Caco-2 (cell line): ENCODE measurements at regions of chr12 and their contacts with region 1.

Region 1: DNA sequence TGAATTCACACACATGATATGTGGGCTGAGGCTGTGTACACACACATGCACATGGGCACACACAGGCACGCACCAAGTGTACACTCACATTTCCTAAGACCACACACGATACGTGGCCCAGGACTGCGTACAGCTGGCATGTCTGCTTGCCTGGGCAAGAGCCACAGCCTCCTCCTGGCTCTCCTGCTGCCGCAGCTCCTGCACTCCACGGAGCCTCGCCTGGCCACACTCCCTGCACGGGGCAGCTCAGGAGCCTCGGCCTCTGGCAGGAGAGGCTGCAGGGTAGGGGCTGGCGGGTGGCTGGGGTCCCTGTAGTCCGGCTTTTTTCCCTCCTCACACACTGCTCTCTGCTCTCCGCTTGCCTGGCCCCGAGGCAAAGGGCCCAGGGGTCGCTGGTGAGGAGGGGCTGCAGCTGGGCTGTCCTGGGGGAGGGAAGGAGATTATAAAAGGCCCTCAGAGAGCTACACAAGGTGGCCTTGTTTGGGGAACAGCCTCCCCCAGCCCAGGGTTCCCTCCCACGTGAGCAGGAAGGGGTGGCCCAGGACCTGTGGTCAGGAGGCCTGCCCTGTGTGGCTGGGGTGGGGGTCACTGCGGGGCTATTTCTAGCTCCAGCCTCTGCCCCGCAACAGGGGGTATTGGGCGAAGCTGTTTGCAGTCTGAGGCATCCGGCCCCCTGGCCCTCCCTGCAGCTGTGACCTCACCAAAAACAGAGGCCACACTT is 89.0 kb upstream of the SFSWAP start:
- DNase-seq: no peak
- H3K4me3 ChIP-seq: no peak overlapping the region
- H3K4me3 Mint-ChIP-seq: no peak overlapping the region
- H3K27ac Mint-ChIP-seq: no peak overlapping the region
- H3K4me1 ChIP-seq: peaks cover 8% of the 10 kb centered on the region
- H3K4me1 Mint-ChIP-seq: peaks cover 7% of the 10 kb centered on the region
- H3K27me3 ChIP-seq: no peaks in the 10 kb centered on the region
- H3K27me3 Mint-ChIP-seq: peaks cover 16% of the 10 kb centered on the region
- CTCF ChIP-seq: no peak

Region 2: GRCh38 chr12:131340616-131341210 is 281.1 kb before region 1 on chr12:
- CTCF ChIA-PET with region 1: no interaction called
- POLR2A ChIA-PET with region 1: no interaction called
- intact Hi-C with region 1: loop called (anchors 5 kb)
- DNase-seq: no peak
- H3K4me3 ChIP-seq: no peak overlapping the region
- H3K4me3 Mint-ChIP-seq: no peak overlapping the region
- H3K27ac Mint-ChIP-seq: no peak overlapping the region
- H3K4me1 ChIP-seq: no peaks in the 10 kb centered on the region
- H3K4me1 Mint-ChIP-seq: no peaks in the 10 kb centered on the region
- H3K27me3 ChIP-seq: no peaks in the 10 kb centered on the region
- H3K27me3 Mint-ChIP-seq: peaks cover 4% of the 10 kb centered on the region
- CTCF ChIP-seq: no peak